Activated naive CD4-positive, alpha-beta T cell treated with anti-CD3 and anti-CD28 coated beads for 36 hours (primary cell): ENCODE measurements at regions of chrX and their contacts with region 1.

Region 1: GRCh38 chrX:10119399-10119990 is 37.3 kb upstream of the CLCN4 start:
- DNase-seq: peak; percentile 74
- H3K4me3 Mint-ChIP-seq: no peak overlapping the region
- H3K27ac Mint-ChIP-seq: no peak overlapping the region
- H3K4me1 Mint-ChIP-seq: peaks cover 17% of the 10 kb centered on the region
- H3K27me3 Mint-ChIP-seq: no peaks in the 10 kb centered on the region

Region 2: GRCh38 chrX:8743126-8743732 is 1376.3 kb before region 1 on chrX:
- CTCF ChIA-PET with region 1: no interaction called
- intact Hi-C with region 1: loop called (anchors 2 kb)
- DNase-seq: peak; percentile 66
- H3K4me3 Mint-ChIP-seq: no peak overlapping the region
- H3K27ac Mint-ChIP-seq: no peak overlapping the region
- H3K4me1 Mint-ChIP-seq: no peaks in the 10 kb centered on the region
- H3K27me3 Mint-ChIP-seq: peaks cover 3% of the 10 kb centered on the region

Region 3: GRCh38 chrX:9885150-9885549 is 234.3 kb before region 1 on chrX:
- CTCF ChIA-PET with region 1: interaction called, 22 read pairs
- intact Hi-C with region 1: loop called (anchors 1 kb)
- DNase-seq: peak; percentile 63
- H3K4me3 Mint-ChIP-seq: no peak overlapping the region
- H3K27ac Mint-ChIP-seq: no peak overlapping the region
- H3K4me1 Mint-ChIP-seq: peaks cover 2% of the 10 kb centered on the region
- H3K27me3 Mint-ChIP-seq: no peaks in the 10 kb centered on the region

Region 4: GRCh38 chrX:9995855-9996339 is 123.6 kb before region 1 on chrX:
- CTCF ChIA-PET with region 1: interaction called, 241 read pairs
- intact Hi-C with region 1: loop called (anchors 1 kb)
- DNase-seq: peak; percentile 78
- H3K4me3 Mint-ChIP-seq: no peak overlapping the region
- H3K27ac Mint-ChIP-seq: no peak overlapping the region
- H3K4me1 Mint-ChIP-seq: peaks cover 9% of the 10 kb centered on the region
- H3K27me3 Mint-ChIP-seq: no peaks in the 10 kb centered on the region

Region 5: GRCh38 chrX:10025742-10026493 is 93.6 kb before region 1 on chrX:
- CTCF ChIA-PET with region 1: interaction called, 11 read pairs
- intact Hi-C with region 1: no loop called
- DNase-seq: no peak
- H3K4me3 Mint-ChIP-seq: no peak overlapping the region
- H3K27ac Mint-ChIP-seq: no peak overlapping the region
- H3K4me1 Mint-ChIP-seq: no peaks in the 10 kb centered on the region
- H3K27me3 Mint-ChIP-seq: no peaks in the 10 kb centered on the region

Region 6: DNA sequence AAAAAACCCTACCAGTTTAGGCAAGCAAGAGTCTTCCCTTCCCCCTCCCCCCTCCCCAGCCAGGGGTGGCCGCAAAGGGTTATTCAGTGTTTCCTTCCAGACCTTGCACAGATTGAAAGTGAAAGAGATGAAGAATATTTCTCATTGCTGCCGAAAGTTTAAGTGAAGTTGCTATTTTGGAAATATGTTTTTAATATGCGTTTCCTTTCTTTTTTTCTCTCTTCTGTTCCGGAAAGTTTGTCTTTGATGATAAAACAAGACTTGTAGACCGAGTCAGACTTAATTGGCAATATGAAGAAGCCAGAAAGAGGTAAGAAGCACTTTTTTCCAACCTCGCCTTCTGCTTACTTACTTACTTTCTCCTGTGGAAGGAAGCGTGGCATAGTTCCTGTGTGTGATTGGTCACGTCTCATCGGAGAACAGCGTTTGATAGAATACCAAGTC is 21.2 kb before region 1 on chrX:
- CTCF ChIA-PET with region 1: interaction called, 29 read pairs
- intact Hi-C with region 1: no loop called
- DNase-seq: peak; percentile 80
- H3K4me3 Mint-ChIP-seq: peak overlapping the region; percentile 69
- H3K27ac Mint-ChIP-seq: peak overlapping the region; percentile 83
- H3K4me1 Mint-ChIP-seq: peaks cover 51% of the 10 kb centered on the region
- H3K27me3 Mint-ChIP-seq: no peaks in the 10 kb centered on the region